Endothelial cell of umbilical vein (primary cell): ENCODE measurements at regions of chr1 and their contacts with region 1.

Region 1: GRCh38 chr1:170531758-170532657 is at the start of gene GORAB:
- DNase-seq: peak; percentile 94
- H3K4me3 ChIP-seq: peak within 1 kb of the TSS; percentile 50 to 78 (median 65)
- H3K27ac ChIP-seq: peak within 1 kb of the TSS; percentile 87
- H3K4me1 ChIP-seq: peaks cover 14% of the 10 kb centered on the region
- H3K27me3 ChIP-seq: peaks cover 5 to 12% of the 10 kb centered on the region in 2 experiments
- CTCF ChIP-seq: no peak
- POLR2A ChIP-seq: peak; percentile 79
- total RNA-seq, gene GORAB: 6.4 and 7.7 TPM in 2 replicates

Region 2: DNA sequence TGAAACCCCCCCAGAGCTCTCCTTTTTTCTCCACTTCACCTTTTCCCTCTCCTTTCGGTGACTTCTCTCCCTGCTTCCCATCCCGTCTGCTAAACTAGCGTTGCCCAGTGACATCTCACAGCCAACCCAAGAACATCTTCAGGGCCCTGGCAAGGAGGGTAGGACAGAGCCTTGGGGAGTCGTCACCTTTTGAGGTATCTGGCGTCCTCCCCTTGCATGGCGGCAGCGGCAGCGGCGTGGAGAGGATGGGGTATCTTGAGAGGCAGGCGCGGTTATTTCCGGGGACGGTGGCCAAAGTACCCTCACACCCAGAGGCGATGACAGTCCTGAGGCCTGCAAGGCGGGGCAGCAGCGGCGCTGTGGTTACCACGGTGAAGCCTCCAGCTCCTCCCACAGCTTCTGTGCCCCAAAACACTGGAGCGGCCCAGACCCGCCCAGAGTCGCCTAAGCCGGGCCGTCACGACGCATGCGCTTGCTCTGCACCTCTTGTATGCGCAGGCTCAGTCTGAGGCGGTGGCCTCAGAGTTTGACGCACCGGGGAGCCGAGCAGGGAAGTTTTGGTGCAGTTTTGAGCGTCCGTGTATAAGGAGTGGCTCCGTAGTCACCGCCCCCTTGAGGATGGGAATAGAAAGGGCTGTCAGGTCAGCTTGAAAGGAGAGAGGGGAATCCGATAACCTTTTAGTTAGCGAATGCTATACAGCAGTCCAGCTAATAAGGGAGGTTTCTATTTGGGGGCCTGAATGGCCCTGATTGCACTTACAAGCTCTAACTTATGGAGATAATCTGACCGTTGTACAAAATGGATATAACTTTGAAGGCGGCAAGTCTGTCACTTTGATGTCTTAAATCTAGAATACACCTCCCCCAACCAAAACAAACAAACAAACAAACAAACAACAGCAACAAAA is 457.5 kb before region 1 on chr1 and contains the start of gene KIFAP3:
- CTCF ChIA-PET with region 1: no interaction called
- POLR2A ChIA-PET with region 1: no interaction called
- dilution Hi-C with region 1: no loop called
- intact Hi-C with region 1: loop called (anchors 10 kb)
- DNase-seq: peak; percentile 98
- H3K4me3 ChIP-seq: peak within 1 kb of the TSS; percentile 41 to 77 (median 65)
- H3K27ac ChIP-seq: peak within 1 kb of the TSS; percentile 2
- H3K4me1 ChIP-seq: peaks cover 7% of the 10 kb centered on the region
- H3K27me3 ChIP-seq: no peaks in the 10 kb centered on the region
- CTCF ChIP-seq: peak; percentile 45 to 57
- POLR2A ChIP-seq: no peak
- total RNA-seq, gene KIFAP3: 17.5 and 19.6 TPM in 2 replicates

Region 3: DNA sequence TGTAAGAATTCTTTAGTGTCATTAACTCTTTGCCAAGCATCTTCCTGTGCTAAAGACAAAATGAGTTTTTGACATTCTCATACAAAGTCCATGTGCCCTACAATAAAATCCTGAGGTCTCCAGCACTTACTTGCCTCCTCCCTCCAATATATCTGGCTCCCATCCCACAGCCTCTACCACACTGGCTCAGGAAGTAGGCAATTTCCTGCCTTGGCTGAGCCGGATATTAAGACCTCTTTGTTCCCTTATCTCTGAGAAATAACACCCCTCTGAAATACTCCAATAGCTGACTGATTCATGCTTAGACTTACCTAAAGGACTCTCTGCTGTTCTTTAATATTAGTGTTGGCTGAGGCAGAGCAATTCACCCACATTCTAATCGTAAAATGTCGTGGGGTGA is 37.6 kb before region 1 on chr1:
- CTCF ChIA-PET with region 1: no interaction called
- POLR2A ChIA-PET with region 1: no interaction called
- dilution Hi-C with region 1: no loop called
- intact Hi-C with region 1: loop called (anchors 1 kb)
- DNase-seq: peak; percentile 91
- H3K4me3 ChIP-seq: peak overlapping the region in 1 of 3 experiments; percentile 10
- H3K27ac ChIP-seq: peak overlapping the region; percentile 33
- H3K4me1 ChIP-seq: peaks cover 20% of the 10 kb centered on the region
- H3K27me3 ChIP-seq: no peaks in the 10 kb centered on the region
- CTCF ChIP-seq: no peak
- POLR2A ChIP-seq: no peak

Region 4: DNA sequence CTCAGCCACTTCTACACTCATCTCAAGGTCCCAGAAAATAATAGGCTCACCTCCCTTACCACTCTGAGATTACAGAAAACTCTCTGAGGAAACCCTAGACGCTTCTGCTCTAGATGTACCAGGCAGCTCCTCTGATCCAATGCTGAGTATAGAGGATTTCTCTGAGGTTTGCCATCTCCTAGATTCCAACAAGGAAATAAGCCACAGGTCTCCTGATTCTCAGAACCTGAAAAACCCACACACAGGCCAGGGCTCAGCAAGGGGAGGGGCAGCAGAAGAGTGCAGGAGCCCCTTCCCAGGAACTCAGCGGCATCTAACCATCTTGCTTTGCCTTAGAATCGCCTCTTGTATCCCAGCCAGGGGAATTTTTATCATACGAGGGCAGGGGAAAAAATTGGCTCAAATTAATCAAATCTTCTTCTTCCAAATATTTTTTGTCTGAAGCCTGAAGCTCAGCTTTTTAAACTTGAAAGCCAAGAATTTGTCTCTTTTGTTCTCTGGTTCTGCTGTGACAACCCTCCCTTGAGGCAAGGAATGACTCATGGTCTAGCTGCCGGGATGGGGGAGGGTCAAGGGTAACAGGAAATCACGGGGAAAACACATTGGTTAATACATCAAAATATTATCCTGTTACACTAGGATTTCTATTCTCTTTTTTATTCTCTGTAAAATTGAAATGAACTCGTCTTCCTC is 30.8 kb after region 1 on chr1:
- CTCF ChIA-PET with region 1: interaction called, 4 read pairs
- POLR2A ChIA-PET with region 1: interaction called, 3 read pairs
- dilution Hi-C with region 1: no loop called
- intact Hi-C with region 1: loop called (anchors 1 kb)
- DNase-seq: peak; percentile 93
- H3K4me3 ChIP-seq: no peak overlapping the region
- H3K27ac ChIP-seq: peak overlapping the region; percentile 88
- H3K4me1 ChIP-seq: peaks cover 21% of the 10 kb centered on the region
- H3K27me3 ChIP-seq: no peaks in the 10 kb centered on the region
- CTCF ChIP-seq: no peak
- POLR2A ChIP-seq: no peak